Spleen (tissue), 13 donors: ENCODE measurements at regions of chr7 and their contacts with region 1.

Region 1: DNA sequence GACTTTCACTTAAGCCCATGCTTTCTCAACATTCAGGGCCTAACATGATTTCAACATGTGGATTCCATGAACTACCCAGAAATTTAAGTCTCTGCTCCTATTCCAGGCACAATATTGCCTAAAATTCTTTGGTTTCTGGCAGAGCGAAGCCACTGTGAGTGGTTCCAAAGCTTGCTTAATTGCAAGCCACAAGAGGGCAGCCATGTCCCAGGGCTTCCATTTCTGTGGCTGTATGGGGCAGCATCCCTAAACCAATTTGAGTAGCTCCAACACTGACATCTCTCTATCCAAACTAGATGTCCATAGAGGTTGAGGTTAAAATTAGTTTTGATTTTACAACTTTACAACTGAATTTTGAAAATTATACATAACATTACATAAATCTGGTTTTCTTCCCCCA is 56.3 kb upstream of the MDFIC start:
- DNase-seq: peak; percentile 78
- H3K4me3 ChIP-seq: no peak overlapping the region
- H3K27ac ChIP-seq: no peak overlapping the region
- H3K4me1 ChIP-seq: no peaks in the 10 kb centered on the region
- H3K27me3 ChIP-seq: no peaks in the 10 kb centered on the region
- CTCF ChIP-seq: peak; percentile 17 to 75 (median 65)
- POLR2A ChIP-seq: no peak

Region 2: GRCh38 chr7:115087437-115087836 is 221.9 kb after region 1 on chr7:
- intact Hi-C with region 1: no loop called
- DNase-seq: no peak
- H3K4me3 ChIP-seq: no peak overlapping the region
- H3K27ac ChIP-seq: no peak overlapping the region
- H3K4me1 ChIP-seq: peaks cover 0 to 5% (median 0%) of the 10 kb centered on the region in 6 donors
- H3K27me3 ChIP-seq: no peaks in the 10 kb centered on the region
- CTCF ChIP-seq: no peak
- POLR2A ChIP-seq: no peak

Region 3: GRCh38 chr7:115217373-115217772 is 351.8 kb after region 1 on chr7:
- intact Hi-C with region 1: loop called (anchors 10 kb)
- DNase-seq: no peak
- H3K4me3 ChIP-seq: no peak overlapping the region
- H3K27ac ChIP-seq: no peak overlapping the region
- H3K4me1 ChIP-seq: no peaks in the 10 kb centered on the region
- H3K27me3 ChIP-seq: no peaks in the 10 kb centered on the region
- CTCF ChIP-seq: peak in 5 of 11 experiments; percentile 16 to 52 (median 27)
- POLR2A ChIP-seq: no peak